ENCODE measurements at regions of chr1 and their contacts with region 1.

Region 1: GRCh38 chr1:221648201-221648600 is 93.7 kb downstream of the DUSP10 start:
- DNase-seq: no peak
- H3K4me3 ChIP-seq: no peak overlapping the region
- H3K27ac ChIP-seq: no peak overlapping the region
- H3K4me1 ChIP-seq: no peaks in the 10 kb centered on the region
- H3K27me3 ChIP-seq: no peaks in the 10 kb centered on the region
- CTCF ChIP-seq: no peak
- POLR2A ChIP-seq: no peak

Region 2: DNA sequence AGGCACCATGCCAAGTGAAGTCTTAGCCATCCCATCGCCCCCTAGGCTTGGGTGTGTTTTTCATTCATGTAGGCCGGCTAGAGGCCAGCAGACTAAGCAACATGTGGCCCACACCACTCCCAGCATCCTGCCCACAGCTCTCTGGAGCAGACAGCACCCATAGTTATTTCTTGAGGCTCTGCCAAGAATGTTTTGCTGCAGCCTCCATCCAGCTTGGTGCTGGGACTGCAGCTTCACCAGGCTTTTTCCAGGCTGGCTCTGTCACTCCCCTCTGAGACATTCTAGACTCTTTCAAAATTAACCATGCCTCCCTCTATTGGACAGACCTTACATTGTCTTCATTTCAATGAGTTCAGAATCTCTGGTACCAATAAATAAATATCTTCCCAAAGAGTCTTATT is 10.6 kb before region 1 on chr1:
- intact Hi-C with region 1: loop called (anchors 2 kb)
- DNase-seq: no peak
- H3K4me3 ChIP-seq: no peak overlapping the region
- H3K27ac ChIP-seq: no peak overlapping the region
- H3K4me1 ChIP-seq: no peaks in the 10 kb centered on the region
- H3K27me3 ChIP-seq: no peaks in the 10 kb centered on the region
- CTCF ChIP-seq: no peak
- POLR2A ChIP-seq: no peak

Region 3: DNA sequence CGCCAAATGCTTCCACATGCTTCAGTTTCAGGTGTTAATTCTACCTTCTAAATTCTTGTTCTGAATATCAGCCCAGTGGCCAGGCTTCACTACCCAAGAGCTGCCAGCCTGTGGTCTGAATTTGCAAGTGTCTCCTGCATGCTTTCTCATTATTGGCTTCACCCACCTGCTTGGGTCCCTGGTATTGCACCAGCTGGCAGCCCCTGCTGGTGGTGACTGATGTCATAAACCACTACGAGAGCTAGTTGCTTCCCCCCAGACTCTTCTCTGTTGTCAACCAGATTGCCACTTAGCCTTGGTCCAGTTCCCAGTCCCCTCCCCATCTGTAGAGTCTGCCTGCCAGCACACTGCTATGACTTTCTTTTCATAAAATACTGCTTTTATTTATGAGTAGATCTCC is 291.4 kb after region 1 on chr1:
- intact Hi-C with region 1: no loop called
- DNase-seq: no peak
- H3K4me3 ChIP-seq: no peak overlapping the region
- H3K27ac ChIP-seq: no peak overlapping the region
- H3K4me1 ChIP-seq: no peaks in the 10 kb centered on the region
- H3K27me3 ChIP-seq: no peaks in the 10 kb centered on the region
- CTCF ChIP-seq: no peak
- POLR2A ChIP-seq: no peak

Measured in breast epithelium (tissue), 4 donors.